Naive thymus-derived CD4-positive, alpha-beta T cell (primary cell): ENCODE measurements at regions of chr22 and their contacts with region 1.

Region 1: DNA sequence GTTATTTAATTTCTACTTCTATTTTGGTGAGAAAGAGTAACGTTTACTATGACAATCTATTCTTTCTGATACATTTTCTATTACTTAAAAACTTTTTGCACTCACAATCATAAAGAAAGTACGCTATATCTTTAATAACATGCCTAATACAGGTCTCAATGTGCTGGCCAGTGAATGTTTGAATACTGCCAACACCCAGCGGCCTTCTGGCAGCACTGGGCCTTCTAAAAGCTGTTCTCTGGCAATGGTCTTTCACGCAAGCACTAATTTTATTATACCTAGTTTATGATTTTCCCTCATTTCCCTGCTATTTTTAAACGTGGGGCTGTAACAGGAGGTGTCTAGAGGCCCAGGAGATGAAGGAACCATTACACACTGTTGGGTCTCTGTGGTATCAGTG is 349.8 kb upstream of the PITPNB start:
- DNase-seq: no peak
- ATAC-seq: no peak
- H3K4me3 ChIP-seq: no peak overlapping the region
- H3K4me3 Mint-ChIP-seq: no peak overlapping the region
- H3K27ac ChIP-seq: no peak overlapping the region
- H3K27ac Mint-ChIP-seq: no peak overlapping the region
- H3K4me1 ChIP-seq: no peaks in the 10 kb centered on the region
- H3K4me1 Mint-ChIP-seq: peaks cover 0 to 8% (median 0%) of the 10 kb centered on the region in 7 donors
- H3K27me3 ChIP-seq: no peaks in the 10 kb centered on the region
- H3K27me3 Mint-ChIP-seq: peaks cover 0 to 5% (median 0%) of the 10 kb centered on the region in 5 donors

Region 2: DNA sequence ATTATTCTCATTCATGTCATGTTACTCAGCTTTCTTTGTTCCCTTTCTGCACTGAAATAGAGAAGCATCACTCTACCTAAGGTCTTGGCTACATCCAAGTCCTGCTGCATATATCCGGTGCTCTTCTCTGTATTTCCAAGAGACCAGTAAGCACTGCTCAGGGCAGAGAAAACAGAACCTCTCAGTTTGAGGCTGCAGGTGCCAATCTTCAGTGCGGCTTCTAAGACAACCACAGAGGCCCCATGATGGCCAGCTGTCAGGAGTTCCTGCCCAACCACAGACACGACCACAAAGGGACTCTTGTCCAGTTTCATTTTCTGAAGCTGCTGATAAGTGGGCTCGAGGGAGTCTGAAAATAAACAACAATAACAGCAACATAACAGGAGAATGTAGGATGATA is 28.7 kb after region 1 on chr22:
- CTCF ChIA-PET with region 1: no interaction called
- POLR2A ChIA-PET with region 1: no interaction called
- intact Hi-C with region 1: loop called in 1 of 2 experiments (anchors 2 kb)
- DNase-seq: no peak
- ATAC-seq: peak; percentile 55
- H3K4me3 ChIP-seq: no peak overlapping the region
- H3K4me3 Mint-ChIP-seq: no peak overlapping the region
- H3K27ac ChIP-seq: no peak overlapping the region
- H3K27ac Mint-ChIP-seq: no peak overlapping the region
- H3K4me1 ChIP-seq: no peaks in the 10 kb centered on the region
- H3K4me1 Mint-ChIP-seq: peaks cover 0 to 21% (median 6%) of the 10 kb centered on the region in 7 donors
- H3K27me3 ChIP-seq: no peaks in the 10 kb centered on the region
- H3K27me3 Mint-ChIP-seq: peaks cover 0 to 4% (median 0%) of the 10 kb centered on the region in 5 donors